ENCODE measurements at regions of chr17 and their contacts with region 1.

Region 1: GRCh38 chr17:18033442-18034099 is 5.4 kb downstream of the ATPAF2 start:
- DNase-seq: peak; percentile 67
- ATAC-seq: peak; percentile 89
- H3K4me3 ChIP-seq: no peak overlapping the region
- H3K27ac ChIP-seq: no peak overlapping the region
- H3K4me1 ChIP-seq: peaks cover 16% of the 10 kb centered on the region
- H3K27me3 ChIP-seq: no peaks in the 10 kb centered on the region
- CTCF ChIP-seq: peak; percentile 35 to 92 (median 62); a peak in 5 of 6 replicates
- EP300 ChIP-seq: peak in 1 of 2 experiments; percentile 17; a peak in 1 of 4 replicates
- POLR2A ChIP-seq: no peak
- RAD21 ChIP-seq: peak; percentile 94

Region 2: GRCh38 chr17:17681187-17681848 is 352.3 kb before region 1 on chr17 and contains the start of gene RAI1:
- CTCF ChIA-PET with region 1: interaction called, 19 read pairs
- POLR2A ChIA-PET with region 1: interaction called, 8 read pairs
- RAD21 ChIA-PET with region 1: interaction called, 9 read pairs
- SMC1A ChIA-PET with region 1: interaction called, 4 read pairs
- in situ Hi-C with region 1: loop called (anchors 5 kb)
- intact Hi-C with region 1: loop called (anchors 2 kb)
- DNase-seq: no peak
- ATAC-seq: peak; percentile 41
- H3K4me3 ChIP-seq: peak within 1 kb of the TSS; percentile 99
- H3K27ac ChIP-seq: peak within 1 kb of the TSS; percentile 90
- H3K4me1 ChIP-seq: peaks cover 30% of the 10 kb centered on the region
- H3K27me3 ChIP-seq: no peaks in the 10 kb centered on the region; a peak in 1 of 4 replicates
- CTCF ChIP-seq: peak; percentile 48 to 80 (median 63); a peak in 5 of 6 replicates
- EP300 ChIP-seq: no peak
- POLR2A ChIP-seq: no peak; the same call in 1 of the 2 replicates
- RAD21 ChIP-seq: peak; percentile 84
- polyA plus RNA-seq, gene RAI1: 0.66 to 0.74 TPM

Region 3: GRCh38 chr17:17890773-17891759 is 142.5 kb before region 1 on chr17:
- CTCF ChIA-PET with region 1: interaction called, 73 read pairs
- POLR2A ChIA-PET with region 1: no interaction called
- RAD21 ChIA-PET with region 1: interaction called, 12 read pairs
- SMC1A ChIA-PET with region 1: interaction called, 13 read pairs
- in situ Hi-C with region 1: loop called (anchors 5 kb)
- intact Hi-C with region 1: loop called (anchors 2 kb)
- DNase-seq: no peak
- ATAC-seq: peak; percentile 97
- H3K4me3 ChIP-seq: no peak overlapping the region
- H3K27ac ChIP-seq: no peak overlapping the region
- H3K4me1 ChIP-seq: peaks cover 19% of the 10 kb centered on the region
- H3K27me3 ChIP-seq: no peaks in the 10 kb centered on the region
- CTCF ChIP-seq: peak; percentile 71 to 83 (median 74)
- EP300 ChIP-seq: no peak
- POLR2A ChIP-seq: no peak
- RAD21 ChIP-seq: peak; percentile 85

Region 4: GRCh38 chr17:17959520-17960361 is 73.8 kb before region 1 on chr17:
- CTCF ChIA-PET with region 1: interaction called, 4 read pairs
- POLR2A ChIA-PET with region 1: interaction called, 5 read pairs
- RAD21 ChIA-PET with region 1: interaction called, 7 read pairs
- SMC1A ChIA-PET with region 1: interaction called, 12 read pairs
- in situ Hi-C with region 1: no loop called
- intact Hi-C with region 1: loop called (anchors 5 kb)
- DNase-seq: peak; percentile 68
- ATAC-seq: peak; percentile 85
- H3K4me3 ChIP-seq: peak overlapping the region; percentile 6; the same call in 1 of the 2 replicates
- H3K27ac ChIP-seq: peak overlapping the region; percentile 63
- H3K4me1 ChIP-seq: peaks cover 23% of the 10 kb centered on the region
- H3K27me3 ChIP-seq: no peaks in the 10 kb centered on the region
- CTCF ChIP-seq: no peak
- EP300 ChIP-seq: no peak
- POLR2A ChIP-seq: no peak
- RAD21 ChIP-seq: no peak

Region 5: GRCh38 chr17:17985555-17985954 is 48.0 kb before region 1 on chr17:
- CTCF ChIA-PET with region 1: interaction called, 36 read pairs
- POLR2A ChIA-PET with region 1: interaction called, 3 read pairs
- RAD21 ChIA-PET with region 1: interaction called, 6 read pairs
- SMC1A ChIA-PET with region 1: interaction called, 21 read pairs
- in situ Hi-C with region 1: no loop called
- intact Hi-C with region 1: loop called (anchors 1 kb)
- DNase-seq: no peak
- ATAC-seq: peak; percentile 93
- H3K4me3 ChIP-seq: no peak overlapping the region
- H3K27ac ChIP-seq: no peak overlapping the region
- H3K4me1 ChIP-seq: no peaks in the 10 kb centered on the region; the same call in 1 of the 2 replicates
- H3K27me3 ChIP-seq: no peaks in the 10 kb centered on the region; a peak in 1 of 4 replicates
- CTCF ChIP-seq: peak; percentile 55 to 58 (median 56)
- EP300 ChIP-seq: no peak
- POLR2A ChIP-seq: no peak
- RAD21 ChIP-seq: peak; percentile 61

Region 6: GRCh38 chr17:18183334-18184142 is 150.0 kb after region 1 on chr17 and contains the start of gene ALKBH5:
- CTCF ChIA-PET with region 1: no interaction called
- POLR2A ChIA-PET with region 1: no interaction called
- RAD21 ChIA-PET with region 1: no interaction called
- SMC1A ChIA-PET with region 1: no interaction called
- in situ Hi-C with region 1: no loop called
- intact Hi-C with region 1: no loop called
- DNase-seq: peak; percentile 97
- ATAC-seq: peak; percentile 88
- H3K4me3 ChIP-seq: peak within 1 kb of the TSS; percentile 83
- H3K27ac ChIP-seq: peak within 1 kb of the TSS; percentile 97
- H3K4me1 ChIP-seq: peaks cover 11% of the 10 kb centered on the region
- H3K27me3 ChIP-seq: no peaks in the 10 kb centered on the region
- CTCF ChIP-seq: peak; percentile 35 to 54 (median 45); a peak in 5 of 6 replicates
- EP300 ChIP-seq: no peak
- POLR2A ChIP-seq: peak; percentile 77
- RAD21 ChIP-seq: no peak
- polyA plus RNA-seq, gene ALKBH5: 13.7 to 31.8 TPM

Measured in GM12878 (cell line).